A549 (cell line): ENCODE measurements at regions of chr10 and their contacts with region 1.

Region 1: DNA sequence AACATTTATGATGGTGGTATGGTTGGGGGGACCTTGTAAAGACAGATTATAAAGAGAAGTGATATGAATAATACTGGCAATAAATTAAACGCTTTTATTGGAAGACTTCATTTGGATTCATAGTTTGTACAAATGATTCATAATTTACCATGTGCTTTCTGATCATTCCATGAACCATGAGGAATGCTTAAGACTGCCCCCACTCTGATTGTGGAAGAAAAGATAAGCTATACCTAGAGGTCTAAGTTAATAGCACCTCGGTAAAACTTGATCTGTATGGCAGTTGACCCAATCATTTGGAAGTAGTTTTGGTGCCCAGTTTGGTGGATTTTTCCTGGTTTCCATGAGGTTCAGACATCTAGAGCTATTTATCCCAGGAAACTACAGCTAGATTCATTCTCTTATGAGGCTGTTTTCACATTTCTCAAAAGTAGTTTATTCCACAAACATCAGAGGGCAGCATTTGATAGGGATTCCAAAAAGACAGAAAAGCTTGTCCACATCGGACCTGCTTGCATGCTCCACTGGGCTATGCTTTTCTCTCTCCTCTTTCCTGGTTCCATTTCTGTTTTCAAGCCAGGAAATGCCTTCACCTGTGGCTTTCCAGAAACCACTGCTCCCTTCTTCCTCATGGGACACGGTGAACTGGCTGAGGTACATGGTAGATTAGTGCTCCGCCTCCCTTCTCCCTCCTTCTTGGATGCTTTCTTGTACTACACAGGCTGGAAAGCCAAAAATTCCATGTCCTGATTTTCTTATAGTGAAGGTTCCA is 29.2 kb downstream of the TFAM start:
- DNase-seq: peak; percentile 57 to 82
- ATAC-seq: peak; percentile 83 to 84
- H3K4me3 ChIP-seq: no peak overlapping the region
- H3K27ac ChIP-seq: peak overlapping the region; percentile 60 to 86
- H3K4me1 ChIP-seq: peaks cover 37% of the 10 kb centered on the region
- CTCF ChIP-seq: peak; percentile 89
- EP300 ChIP-seq: no peak
- POLR2A ChIP-seq: no peak
- RAD21 ChIP-seq: peak; percentile 96 to 98

Region 2: GRCh38 chr10:58404001-58404400 is 10.5 kb before region 1 on chr10:
- CTCF ChIA-PET with region 1: interaction called, 11 read pairs
- POLR2A ChIA-PET with region 1: interaction called, 5 read pairs
- DNase-seq: no peak
- ATAC-seq: no peak
- H3K4me3 ChIP-seq: no peak overlapping the region
- H3K27ac ChIP-seq: no peak overlapping the region
- H3K4me1 ChIP-seq: 0 out of 3 replicates have a peak, but pooled peaks cover 4% of the 10 kb centered on the region
- CTCF ChIP-seq: no peak
- EP300 ChIP-seq: no peak
- POLR2A ChIP-seq: no peak
- RAD21 ChIP-seq: no peak

Region 3: DNA sequence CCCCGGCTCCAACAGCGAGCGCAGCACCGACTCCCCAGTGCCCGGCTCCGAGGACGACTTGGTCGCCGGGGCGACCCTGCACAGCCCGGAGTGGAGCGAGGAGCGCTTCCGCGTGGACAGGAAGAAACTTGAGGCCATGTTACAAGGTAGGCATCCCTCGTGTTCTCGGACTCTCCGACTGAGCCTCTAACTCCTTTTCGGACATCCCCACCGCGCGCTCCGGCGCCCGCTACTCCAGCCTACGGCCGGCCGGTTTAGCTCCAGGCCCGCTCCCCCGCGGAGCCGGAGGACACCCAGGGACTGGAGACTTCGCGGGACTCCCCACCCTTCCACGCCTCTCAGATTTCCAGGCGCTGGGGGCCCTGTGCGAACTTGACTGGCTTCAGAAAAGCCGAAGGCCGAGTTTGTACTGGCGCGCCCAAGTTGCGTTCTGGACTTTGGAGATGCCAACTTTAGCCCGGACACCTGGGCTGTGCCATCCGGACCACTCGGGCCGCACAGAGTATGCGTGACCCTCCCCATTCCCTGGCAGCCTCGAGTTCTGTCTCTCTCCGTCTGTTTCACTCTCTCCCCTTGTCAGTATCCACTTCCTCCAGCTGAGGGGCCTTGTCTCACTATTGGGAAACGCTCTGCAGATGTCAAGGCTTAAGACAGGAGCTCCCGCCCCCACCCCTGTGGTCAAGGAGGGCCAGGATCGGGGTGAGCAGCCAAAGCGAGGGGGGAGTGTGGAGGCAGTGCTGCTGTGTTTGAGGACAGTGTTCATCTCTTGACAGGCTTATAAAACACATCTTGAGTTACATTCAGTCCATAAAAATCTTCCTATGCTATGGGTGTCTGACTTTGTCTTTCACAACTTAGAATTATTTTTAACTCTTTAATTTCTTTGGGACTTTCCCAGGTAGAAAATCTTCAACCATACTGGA is 99.0 kb after region 1 on chr10:
- CTCF ChIA-PET with region 1: interaction called, 25 read pairs
- POLR2A ChIA-PET with region 1: no interaction called
- DNase-seq: peak; percentile 69 to 87
- ATAC-seq: peak; percentile 69 to 80
- H3K4me3 ChIP-seq: peak overlapping the region; percentile 69
- H3K27ac ChIP-seq: peak overlapping the region; percentile 91 to 99
- H3K4me1 ChIP-seq: peaks cover 24% of the 10 kb centered on the region
- CTCF ChIP-seq: no peak
- EP300 ChIP-seq: 0 out of 5 replicates have a peak, but pooled peaks of 1 of the 2 experiments have one; percentile 15
- POLR2A ChIP-seq: 0 out of 2 replicates have a peak, but pooled peaks have one; percentile 15
- RAD21 ChIP-seq: peak in 1 of 2 experiments; percentile 17; a peak in 2 of 5 replicates

Region 4: GRCh38 chr10:58641095-58641531 is 226.7 kb after region 1 on chr10:
- CTCF ChIA-PET with region 1: interaction called, 50 read pairs
- POLR2A ChIA-PET with region 1: interaction called, 9 read pairs
- DNase-seq: peak; percentile 65 to 94
- ATAC-seq: peak; percentile 76 to 87
- H3K4me3 ChIP-seq: no peak overlapping the region; the same call in 2 of the 3 replicates
- H3K27ac ChIP-seq: peak overlapping the region; percentile 83 to 90
- H3K4me1 ChIP-seq: peaks cover 86% of the 10 kb centered on the region
- CTCF ChIP-seq: peak; percentile 78
- EP300 ChIP-seq: peak; percentile 86 to 96; a peak in 4 of 5 replicates
- POLR2A ChIP-seq: no peak
- RAD21 ChIP-seq: peak; percentile 84 to 87

Region 5: DNA sequence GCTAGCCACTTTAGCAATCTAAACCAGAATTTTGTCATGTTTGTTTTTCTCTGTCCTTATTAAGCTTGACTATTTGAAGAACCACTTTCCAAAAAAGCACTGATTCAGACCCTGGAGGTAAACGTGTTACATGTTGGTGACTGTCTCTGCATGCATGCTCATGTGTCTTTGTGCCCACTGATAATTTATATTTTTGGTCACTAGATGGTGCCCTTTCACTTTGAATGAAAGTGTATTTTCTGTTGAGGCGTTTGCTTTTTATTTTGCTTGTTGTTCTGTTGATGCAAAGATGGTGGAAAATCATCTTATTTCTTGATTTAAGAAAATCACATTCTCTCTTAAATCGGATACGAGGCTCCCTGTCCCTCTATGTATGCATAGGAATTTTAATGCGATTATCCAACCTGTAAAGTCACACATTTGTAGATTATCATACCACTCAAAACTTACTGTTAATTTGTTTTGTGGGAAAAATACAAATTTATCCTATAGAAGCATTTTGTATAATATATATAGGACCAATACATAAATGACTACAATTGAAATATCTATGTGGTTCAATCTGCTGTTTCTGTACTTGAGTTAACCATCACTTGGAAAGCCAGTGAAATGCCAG is 367.5 kb after region 1 on chr10:
- CTCF ChIA-PET with region 1: interaction called, 14 read pairs
- POLR2A ChIA-PET with region 1: no interaction called
- DNase-seq: peak; percentile 51 to 54
- ATAC-seq: peak; percentile 84 to 87; a peak in 5 of 6 replicates
- H3K4me3 ChIP-seq: no peak overlapping the region
- H3K27ac ChIP-seq: peak overlapping the region; percentile 34 to 53; a peak in 5 of 6 replicates
- H3K4me1 ChIP-seq: peaks cover 62% of the 10 kb centered on the region
- CTCF ChIP-seq: peak; percentile 90
- EP300 ChIP-seq: no peak
- POLR2A ChIP-seq: no peak
- RAD21 ChIP-seq: peak; percentile 83 to 85

Region 6: GRCh38 chr10:59148701-59149100 is 734.2 kb after region 1 on chr10:
- CTCF ChIA-PET with region 1: no interaction called
- POLR2A ChIA-PET with region 1: no interaction called
- DNase-seq: no peak
- ATAC-seq: no peak
- H3K4me3 ChIP-seq: no peak overlapping the region
- H3K27ac ChIP-seq: no peak overlapping the region
- H3K4me1 ChIP-seq: no peaks in the 10 kb centered on the region
- CTCF ChIP-seq: no peak
- EP300 ChIP-seq: no peak
- POLR2A ChIP-seq: no peak
- RAD21 ChIP-seq: no peak